Activated B cell treated with CpG ODN at 0.5 μM for 24 hours (primary cell): ENCODE measurements at regions of chr18 and their contacts with region 1.

Region 1: DNA sequence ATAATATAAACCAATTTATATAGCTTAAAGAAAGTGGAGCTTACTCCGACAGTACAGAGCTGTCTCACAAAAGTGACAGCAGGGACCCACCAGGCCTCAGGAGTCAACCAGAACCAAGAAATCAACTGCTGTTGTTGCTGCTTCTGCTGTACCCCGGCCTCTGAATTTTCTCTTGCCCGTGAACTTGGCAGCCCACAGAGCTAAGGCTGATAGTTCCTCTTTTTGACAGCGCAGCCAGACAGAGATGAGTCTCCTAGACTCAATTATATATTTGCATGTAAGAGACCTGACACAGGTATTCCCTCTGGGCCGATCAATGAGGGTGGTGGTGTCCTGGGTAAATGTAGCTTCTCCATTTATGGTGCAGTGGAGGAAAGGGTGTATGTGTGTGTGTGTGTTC is 109.4 kb downstream of the KCTD1 start:
- DNase-seq: no peak
- ATAC-seq: peak; percentile 96
- H3K4me3 Mint-ChIP-seq: no peak overlapping the region
- H3K27ac Mint-ChIP-seq: no peak overlapping the region
- H3K4me1 Mint-ChIP-seq: peaks cover 7% of the 10 kb centered on the region
- H3K27me3 Mint-ChIP-seq: peaks cover 5% of the 10 kb centered on the region
- CTCF ChIP-seq: no peak

Region 2: DNA sequence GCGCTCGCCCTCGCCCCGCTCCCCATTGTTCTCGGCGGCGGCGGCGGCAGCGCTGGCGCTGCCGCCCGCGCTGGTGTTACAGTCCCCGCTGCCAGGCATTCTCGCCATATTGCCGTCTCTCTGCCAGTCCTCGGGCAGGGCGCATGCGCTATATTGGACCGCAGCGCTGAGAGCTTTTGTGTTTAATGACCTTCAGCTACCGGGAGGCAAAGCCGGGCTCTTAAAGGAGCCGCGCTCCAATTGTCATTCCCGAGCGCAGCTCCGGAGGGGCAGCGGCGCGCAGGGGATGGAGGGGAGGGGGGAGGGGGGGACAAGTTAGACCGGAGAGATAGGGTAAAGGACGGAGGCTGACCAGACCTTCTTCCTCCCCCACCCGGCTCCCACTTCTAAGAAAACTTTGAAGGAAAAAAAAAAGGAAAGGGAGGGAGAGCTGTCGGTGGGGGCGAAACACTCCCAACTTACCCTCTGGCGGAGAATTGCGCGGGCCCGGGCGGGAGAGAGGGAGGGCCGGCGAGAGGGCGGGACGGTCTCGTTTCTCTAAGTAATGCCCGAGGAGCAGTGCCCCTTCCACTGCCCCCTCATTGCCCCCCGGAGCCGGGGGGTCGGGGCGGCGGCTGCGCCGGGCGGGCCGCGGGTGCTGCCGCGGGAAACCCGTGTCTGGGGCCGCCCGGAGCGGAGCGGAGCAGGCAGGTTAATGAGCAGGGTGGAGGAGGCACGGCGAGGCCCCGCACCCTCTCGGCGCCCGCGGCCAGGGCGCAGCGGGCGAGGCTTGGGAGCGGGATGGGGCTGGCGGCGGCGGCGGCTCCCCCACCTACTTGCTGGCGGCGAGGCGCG is 109.7 kb after region 1 on chr18 and contains the start of gene KCTD1:
- CTCF ChIA-PET with region 1: no interaction called
- POLR2A ChIA-PET with region 1: no interaction called
- intact Hi-C with region 1: loop called (anchors 2 kb)
- DNase-seq: peak; percentile 56
- ATAC-seq: peak; percentile 73
- H3K4me3 Mint-ChIP-seq: peak within 1 kb of the TSS; percentile 89
- H3K27ac Mint-ChIP-seq: no peak within 1 kb of the TSS
- H3K4me1 Mint-ChIP-seq: peaks cover 47% of the 10 kb centered on the region
- H3K27me3 Mint-ChIP-seq: peaks cover 21% of the 10 kb centered on the region
- CTCF ChIP-seq: no peak
- total RNA-seq, gene KCTD1: 3.7 and 4.9 TPM in 2 replicates

Region 3: GRCh38 chr18:26593365-26594320 is 154.7 kb after region 1 on chr18:
- CTCF ChIA-PET with region 1: no interaction called
- POLR2A ChIA-PET with region 1: no interaction called
- intact Hi-C with region 1: no loop called
- DNase-seq: no peak
- ATAC-seq: no peak
- H3K4me3 Mint-ChIP-seq: no peak overlapping the region
- H3K27ac Mint-ChIP-seq: no peak overlapping the region
- H3K4me1 Mint-ChIP-seq: no peaks in the 10 kb centered on the region
- H3K27me3 Mint-ChIP-seq: peaks cover 10% of the 10 kb centered on the region
- CTCF ChIP-seq: no peak

Region 4: GRCh38 chr18:26637324-26637723 is 198.3 kb after region 1 on chr18:
- CTCF ChIA-PET with region 1: no interaction called
- POLR2A ChIA-PET with region 1: no interaction called
- intact Hi-C with region 1: no loop called
- DNase-seq: no peak
- ATAC-seq: no peak
- H3K4me3 Mint-ChIP-seq: no peak overlapping the region
- H3K27ac Mint-ChIP-seq: no peak overlapping the region
- H3K4me1 Mint-ChIP-seq: no peaks in the 10 kb centered on the region
- H3K27me3 Mint-ChIP-seq: peaks cover 7% of the 10 kb centered on the region
- CTCF ChIP-seq: no peak